Heart right ventricle (tissue), 16 donors: ENCODE measurements at regions of chr6 and their contacts with region 1.

Region 1: GRCh38 chr6:122530440-122531046 is 58.9 kb upstream of the SERINC1 start:
- DNase-seq: peak in 1 of 2 donors; percentile 57
- ATAC-seq: peak in 6 of 8 donors; percentile 53 to 87 (median 72)
- H3K4me3 ChIP-seq: no peak overlapping the region
- H3K27ac ChIP-seq: no peak overlapping the region
- H3K4me1 ChIP-seq: no peaks in the 10 kb centered on the region
- H3K27me3 ChIP-seq: peaks cover 0 to 29% (median 6%) of the 10 kb centered on the region in 7 donors
- CTCF ChIP-seq: peak; percentile 70 to 95 (median 89)

Region 2: DNA sequence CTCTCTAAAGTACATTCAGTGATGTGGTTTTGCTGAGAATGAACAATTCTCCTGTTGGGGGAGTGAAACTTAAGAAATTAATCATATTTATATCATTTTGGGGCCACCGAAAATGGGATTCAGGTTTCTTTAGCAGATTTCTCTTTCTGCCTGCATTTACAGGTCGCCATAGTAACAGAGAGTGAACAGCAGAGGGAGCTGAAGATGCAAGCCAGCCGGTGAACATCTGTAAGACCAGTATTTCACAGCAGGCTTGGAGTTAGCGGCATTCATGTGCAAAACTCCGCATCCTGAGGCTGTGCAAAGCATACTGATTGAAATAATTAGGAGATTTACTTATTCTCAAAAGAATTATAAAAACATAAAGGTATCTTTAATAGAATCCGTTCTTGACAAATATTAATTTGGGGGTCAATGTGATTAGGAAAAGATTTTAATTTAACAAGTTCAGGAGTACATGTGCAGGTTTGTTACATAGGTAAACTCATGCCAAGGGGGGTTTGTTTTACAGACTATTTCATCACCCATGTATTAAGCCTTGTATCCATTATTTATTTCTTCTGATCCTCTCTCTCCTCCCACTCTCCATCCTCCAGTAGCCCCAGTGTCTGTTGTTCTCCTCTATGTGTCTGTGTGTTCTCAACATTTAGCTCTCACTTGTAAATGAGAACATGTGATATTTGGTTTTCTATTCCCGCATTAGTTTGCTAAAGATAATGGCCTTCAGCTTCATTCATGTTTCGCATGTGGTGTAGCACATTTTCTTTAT is 148.9 kb before region 1 on chr6:
- intact Hi-C with region 1: loop called in 9 of 10 experiments (anchors 1 to 5 kb)
- DNase-seq: peak in 1 of 2 donors; percentile 50
- ATAC-seq: peak in 7 of 8 donors; percentile 70 to 77 (median 74)
- H3K4me3 ChIP-seq: no peak overlapping the region
- H3K27ac ChIP-seq: no peak overlapping the region
- H3K4me1 ChIP-seq: no peaks in the 10 kb centered on the region
- H3K27me3 ChIP-seq: peaks cover 0 to 6% (median 0%) of the 10 kb centered on the region in 7 donors
- CTCF ChIP-seq: peak; percentile 29 to 86 (median 78)

Region 3: GRCh38 chr6:122589115-122589514 is 58.6 kb after region 1 on chr6:
- intact Hi-C with region 1: no loop called
- DNase-seq: no peak
- ATAC-seq: no peak
- H3K4me3 ChIP-seq: no peak overlapping the region
- H3K27ac ChIP-seq: no peak overlapping the region
- H3K4me1 ChIP-seq: no peaks in the 10 kb centered on the region
- H3K27me3 ChIP-seq: no peaks in the 10 kb centered on the region
- CTCF ChIP-seq: no peak

Region 4: DNA sequence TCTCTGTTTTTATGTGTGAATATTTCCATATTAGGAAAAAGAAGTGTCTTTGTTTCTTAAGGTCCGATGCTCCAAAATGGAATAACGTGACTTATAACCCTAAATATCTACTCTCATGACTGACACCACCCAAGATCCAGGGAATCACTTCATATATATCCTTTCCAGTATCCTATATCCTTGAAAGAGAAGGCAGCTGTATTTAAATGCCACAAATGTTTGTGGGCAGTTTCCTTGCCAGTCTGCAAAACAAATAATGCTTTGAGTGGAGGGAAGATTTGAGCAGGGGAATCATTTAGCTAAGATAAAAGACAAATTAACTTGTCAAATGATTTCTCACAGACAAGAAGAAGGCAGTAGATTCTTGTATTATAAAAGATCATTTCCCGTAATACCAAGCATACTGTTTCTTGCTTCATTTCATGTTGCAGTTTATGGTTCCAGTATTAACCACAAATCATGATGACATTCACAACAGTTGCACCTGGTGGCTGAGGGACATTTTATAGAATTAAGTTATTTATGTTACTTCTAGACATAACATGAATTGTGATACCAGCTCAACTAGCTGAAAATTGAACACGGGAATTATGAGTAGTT is 219.0 kb after region 1 on chr6:
- intact Hi-C with region 1: no loop called
- DNase-seq: no peak
- ATAC-seq: no peak
- H3K4me3 ChIP-seq: no peak overlapping the region
- H3K27ac ChIP-seq: no peak overlapping the region
- H3K4me1 ChIP-seq: peaks cover 0 to 20% (median 0%) of the 10 kb centered on the region in 9 donors
- H3K27me3 ChIP-seq: peaks cover 0 to 4% (median 0%) of the 10 kb centered on the region in 7 donors
- CTCF ChIP-seq: no peak